IMR-90 (cell line): ENCODE measurements at regions of chr1 and their contacts with region 1.

Region 1: DNA sequence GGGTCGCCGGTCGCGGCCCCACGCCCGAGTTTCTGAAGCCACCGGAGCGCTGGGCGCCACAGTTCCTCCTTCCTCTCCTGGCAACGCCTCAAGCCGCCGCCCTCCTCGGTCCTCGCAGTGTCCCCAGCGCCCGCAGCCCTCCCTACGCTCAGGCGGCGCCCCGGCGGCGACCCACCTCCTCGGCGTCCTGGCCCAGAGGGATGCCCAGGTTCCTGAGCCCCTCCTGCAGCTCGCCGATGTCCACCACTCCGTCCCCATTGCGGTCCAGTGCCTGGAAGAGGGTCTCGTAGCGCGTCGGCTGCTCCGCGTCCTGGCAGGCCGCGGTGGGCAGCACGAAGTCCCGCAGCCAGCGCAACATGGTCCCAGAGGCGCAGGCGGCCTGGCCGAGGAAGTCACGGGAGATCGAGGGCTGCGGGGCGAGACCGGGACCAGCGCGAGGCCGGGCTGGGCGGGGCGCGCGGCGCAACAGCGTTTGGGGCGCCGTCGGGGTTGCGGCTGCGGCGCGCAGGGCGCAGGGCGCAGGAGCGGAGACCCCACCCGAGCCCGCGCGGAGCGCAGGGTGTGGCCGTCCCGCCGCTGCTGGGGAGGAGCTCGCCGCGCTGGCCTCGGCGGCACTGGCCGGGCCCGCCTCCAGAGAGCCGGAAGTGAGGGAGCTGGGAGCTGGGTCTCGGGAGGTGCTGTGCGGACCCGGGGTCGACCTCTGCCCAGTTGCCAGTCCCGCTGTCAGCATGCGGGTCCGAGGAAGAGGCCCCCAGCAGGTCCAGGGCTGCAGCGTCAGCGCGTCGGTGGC is at the start of gene SLC25A24:
- DNase-seq: peak; percentile 67
- ATAC-seq: peak; percentile 98
- H3K4me3 ChIP-seq: peak within 1 kb of the TSS; percentile 100
- H3K27ac ChIP-seq: peak within 1 kb of the TSS; percentile 99
- H3K4me1 ChIP-seq: peaks cover 2% of the 10 kb centered on the region; the same call in 1 of the 2 replicates
- H3K27me3 ChIP-seq: no peaks in the 10 kb centered on the region
- CTCF ChIP-seq: no peak
- POLR2A ChIP-seq: no peak; the same call in none of the 2 replicates
- RAD21 ChIP-seq: no peak
- total RNA-seq, gene SLC25A24: 20.4 and 45.3 TPM in 2 replicates

Region 2: GRCh38 chr1:108141621-108142020 is 58.4 kb before region 1 on chr1:
- CTCF ChIA-PET with region 1: no interaction called
- POLR2A ChIA-PET with region 1: no interaction called
- dilution Hi-C with region 1: no loop called
- in situ Hi-C with region 1: no loop called
- intact Hi-C with region 1: loop called (anchors 1 kb)
- DNase-seq: peak; percentile 70
- ATAC-seq: no peak
- H3K4me3 ChIP-seq: no peak overlapping the region
- H3K27ac ChIP-seq: no peak overlapping the region
- H3K4me1 ChIP-seq: peaks cover 2% of the 10 kb centered on the region
- H3K27me3 ChIP-seq: no peaks in the 10 kb centered on the region
- CTCF ChIP-seq: no peak
- POLR2A ChIP-seq: no peak
- RAD21 ChIP-seq: no peak

Region 3: DNA sequence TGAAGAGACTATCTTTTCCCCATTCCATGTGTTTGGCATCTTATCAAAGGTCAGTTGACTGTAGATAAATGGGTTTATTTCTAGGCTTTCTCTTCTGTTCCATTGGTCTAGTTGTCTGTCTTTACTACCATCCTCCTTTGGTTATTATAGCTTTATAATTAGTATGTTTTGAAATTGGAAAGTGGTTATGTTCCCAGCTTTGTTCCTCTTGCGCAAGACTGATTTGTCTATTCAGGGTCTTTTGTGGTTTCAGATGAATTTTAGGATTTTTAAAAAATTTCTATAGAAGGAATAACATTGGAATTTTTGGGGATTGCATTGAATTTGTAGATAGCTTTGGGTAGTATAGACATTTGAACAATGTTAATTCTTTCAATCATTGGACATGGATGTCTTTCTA is 120.9 kb after region 1 on chr1:
- CTCF ChIA-PET with region 1: no interaction called
- POLR2A ChIA-PET with region 1: no interaction called
- dilution Hi-C with region 1: no loop called
- in situ Hi-C with region 1: no loop called
- intact Hi-C with region 1: no loop called
- DNase-seq: no peak
- ATAC-seq: no peak
- H3K4me3 ChIP-seq: no peak overlapping the region
- H3K27ac ChIP-seq: no peak overlapping the region
- H3K4me1 ChIP-seq: no peaks in the 10 kb centered on the region
- H3K27me3 ChIP-seq: no peaks in the 10 kb centered on the region
- CTCF ChIP-seq: no peak
- POLR2A ChIP-seq: no peak
- RAD21 ChIP-seq: no peak